Dendritic cell treated with granulocyte-macrophage colony-stimulating factor and Interleukin-4, amounts not matched to agents 40 ng/mL and 50 ng/mL, for 4 days (primary cell): ENCODE measurements at regions of chr2 and their contacts with region 1.

Region 1: DNA sequence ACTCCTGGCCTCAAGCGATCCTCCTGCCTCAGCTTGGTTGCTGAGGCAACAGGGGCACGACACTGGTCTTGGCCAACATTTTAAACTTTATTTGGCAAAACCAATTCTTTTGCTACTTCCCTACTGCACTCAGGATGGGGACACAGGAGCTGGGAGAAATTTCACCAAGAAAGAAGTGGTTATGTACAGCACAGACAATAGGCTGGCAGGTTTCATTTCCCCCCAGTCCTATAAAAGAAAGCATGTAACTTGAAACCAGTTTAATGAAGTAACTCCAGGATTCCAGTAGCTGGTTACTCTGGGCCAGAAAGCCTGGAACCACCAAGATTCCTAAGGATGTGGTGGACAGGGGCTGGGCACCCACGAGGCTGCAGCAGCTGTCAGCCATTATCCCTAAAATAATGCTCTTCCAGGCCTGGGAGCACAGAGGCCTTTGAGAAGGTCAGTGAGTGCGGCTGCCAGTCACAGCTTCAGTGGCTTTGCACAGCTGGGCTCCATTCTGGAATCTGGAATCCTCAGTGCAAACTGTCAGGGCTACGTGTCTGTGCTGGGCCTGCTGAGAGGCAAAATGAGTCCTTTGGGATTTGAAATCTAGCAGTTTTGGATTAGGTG is 142.3 kb upstream of the ITGA6 start:
- H3K4me3 Mint-ChIP-seq: no peak overlapping the region
- H3K27ac Mint-ChIP-seq: peak overlapping the region; percentile 1
- H3K4me1 Mint-ChIP-seq: peaks cover 59% of the 10 kb centered on the region
- H3K27me3 Mint-ChIP-seq: no peaks in the 10 kb centered on the region

Region 2: DNA sequence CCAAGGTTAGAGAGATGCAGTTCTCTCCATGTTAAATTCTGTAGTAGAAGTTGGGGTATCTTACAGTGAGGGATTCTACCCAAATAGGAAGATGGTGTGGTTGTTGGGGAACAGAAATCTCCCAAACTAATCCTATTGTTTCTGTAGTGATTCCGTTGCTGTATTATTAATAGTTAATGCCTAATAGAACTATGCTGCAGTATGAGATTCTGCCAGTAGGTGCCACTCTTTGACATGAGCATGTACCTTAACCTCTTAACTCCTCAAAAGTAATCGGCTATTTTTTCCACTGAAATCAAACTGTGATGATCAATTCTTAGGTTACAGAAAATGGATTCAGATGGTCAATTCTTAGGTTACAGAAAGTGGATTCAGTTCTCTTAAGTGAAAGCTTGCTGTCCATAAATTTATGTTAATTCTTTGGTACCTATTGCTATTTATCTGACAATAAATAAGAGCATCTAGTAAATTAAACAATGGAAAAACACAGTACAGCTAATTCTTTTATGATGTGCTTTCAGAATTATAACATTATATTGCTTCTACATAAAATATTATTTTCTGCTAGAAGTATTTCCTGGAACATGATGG is 84.5 kb before region 1 on chr2:
- intact Hi-C with region 1: loop called (anchors 10 kb)
- H3K4me3 Mint-ChIP-seq: no peak overlapping the region
- H3K27ac Mint-ChIP-seq: no peak overlapping the region
- H3K4me1 Mint-ChIP-seq: peaks cover 55% of the 10 kb centered on the region
- H3K27me3 Mint-ChIP-seq: no peaks in the 10 kb centered on the region

Region 3: DNA sequence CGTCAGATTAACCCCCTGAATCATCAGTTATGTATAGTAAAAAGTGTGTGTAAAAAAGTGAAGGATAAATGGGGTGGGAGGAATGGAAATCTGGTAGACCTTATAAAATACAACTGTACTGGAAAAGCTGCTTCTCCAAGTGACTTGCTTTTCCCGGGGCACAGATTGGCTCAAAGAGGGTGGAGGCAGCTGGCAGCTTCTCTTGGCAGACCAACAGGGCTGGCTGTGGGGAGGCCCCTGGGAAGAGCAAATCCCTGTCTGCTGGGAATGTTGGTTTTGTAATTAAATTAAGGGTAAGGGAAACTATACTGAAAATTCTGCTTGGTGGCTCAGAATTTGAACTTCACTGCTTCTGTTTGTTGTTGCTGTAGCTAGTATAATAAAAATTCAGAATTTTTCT is 28.2 kb before region 1 on chr2:
- intact Hi-C with region 1: no loop called
- H3K4me3 Mint-ChIP-seq: no peak overlapping the region
- H3K27ac Mint-ChIP-seq: no peak overlapping the region
- H3K4me1 Mint-ChIP-seq: peaks cover 23% of the 10 kb centered on the region
- H3K27me3 Mint-ChIP-seq: no peaks in the 10 kb centered on the region

Region 4: GRCh38 chr2:172437419-172438341 is 152.6 kb after region 1 on chr2:
- intact Hi-C with region 1: loop called (anchors 5 kb)
- H3K4me3 Mint-ChIP-seq: no peak overlapping the region
- H3K27ac Mint-ChIP-seq: no peak overlapping the region
- H3K4me1 Mint-ChIP-seq: peaks cover 7% of the 10 kb centered on the region
- H3K27me3 Mint-ChIP-seq: peaks cover 42% of the 10 kb centered on the region